CD4-positive, alpha-beta memory T cell (primary cell): ENCODE measurements at regions of chrX and their contacts with region 1.

Region 1: DNA sequence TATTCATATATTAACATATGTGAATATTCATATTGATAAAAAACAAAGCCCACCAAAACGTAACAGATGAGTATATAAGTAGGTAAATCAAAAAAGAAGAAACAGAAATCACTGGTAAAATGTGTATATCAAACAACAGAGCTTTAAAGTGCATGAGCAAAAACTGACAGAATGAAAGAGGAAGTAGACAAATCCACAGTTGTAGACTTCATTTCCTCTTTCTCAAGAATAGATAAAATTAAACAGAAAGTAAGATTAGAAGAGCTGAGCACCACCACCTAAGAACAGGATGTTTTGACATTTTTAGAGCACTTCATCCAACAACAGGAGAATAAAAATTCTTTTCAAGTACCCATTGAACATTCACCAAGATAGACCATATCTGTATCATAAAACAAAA is 64.6 kb downstream of the CNKSR2 start:
- DNase-seq: peak in 4 of 5 donors; percentile 9 to 28 (median 17)
- H3K4me3 ChIP-seq: no peak overlapping the region
- H3K4me3 Mint-ChIP-seq: peak overlapping the region; percentile 62 to 79 (median 76)
- H3K27ac ChIP-seq: no peak overlapping the region
- H3K27ac Mint-ChIP-seq: peak overlapping the region; percentile 32 to 93 (median 73)
- H3K4me1 ChIP-seq: peaks cover 15% of the 10 kb centered on the region
- H3K4me1 Mint-ChIP-seq: peaks cover 6 to 22% (median 12%) of the 10 kb centered on the region in 4 donors
- H3K27me3 ChIP-seq: no peaks in the 10 kb centered on the region
- H3K27me3 Mint-ChIP-seq: no peaks in the 10 kb centered on the region

Region 2: GRCh38 chrX:21207080-21207479 is 231.7 kb before region 1 on chrX:
- CTCF ChIA-PET with region 1: no interaction called
- POLR2A ChIA-PET with region 1: no interaction called
- intact Hi-C with region 1: no loop called
- DNase-seq: no peak
- H3K4me3 ChIP-seq: no peak overlapping the region
- H3K4me3 Mint-ChIP-seq: no peak overlapping the region
- H3K27ac ChIP-seq: no peak overlapping the region
- H3K27ac Mint-ChIP-seq: no peak overlapping the region
- H3K4me1 ChIP-seq: no peaks in the 10 kb centered on the region
- H3K4me1 Mint-ChIP-seq: no peaks in the 10 kb centered on the region
- H3K27me3 ChIP-seq: no peaks in the 10 kb centered on the region
- H3K27me3 Mint-ChIP-seq: no peaks in the 10 kb centered on the region

Region 3: GRCh38 chrX:21374163-21374993 is 64.4 kb before region 1 on chrX and contains the start of gene CNKSR2:
- CTCF ChIA-PET with region 1: no interaction called
- POLR2A ChIA-PET with region 1: interaction called, 5 read pairs
- intact Hi-C with region 1: loop called (anchors 2 kb)
- DNase-seq: peak; percentile 60 to 68 (median 65)
- H3K4me3 ChIP-seq: peak within 1 kb of the TSS in 1 of 2 donors; percentile 52
- H3K4me3 Mint-ChIP-seq: peak within 1 kb of the TSS; percentile 86 to 92 (median 87)
- H3K27ac ChIP-seq: peak within 1 kb of the TSS; percentile 21
- H3K27ac Mint-ChIP-seq: peak within 1 kb of the TSS in 6 of 7 donors; percentile 9 to 81 (median 36)
- H3K4me1 ChIP-seq: peaks cover 19% of the 10 kb centered on the region
- H3K4me1 Mint-ChIP-seq: peaks cover 2 to 22% (median 12%) of the 10 kb centered on the region in 4 donors
- H3K27me3 ChIP-seq: no peaks in the 10 kb centered on the region
- H3K27me3 Mint-ChIP-seq: peaks cover 0 to 1% of the 10 kb centered on the region in 2 donors
- total RNA-seq, gene CNKSR2: 8.6 to 9.8 TPM

Region 4: GRCh38 chrX:21398426-21398825 is 40.4 kb before region 1 on chrX:
- CTCF ChIA-PET with region 1: no interaction called
- POLR2A ChIA-PET with region 1: no interaction called
- intact Hi-C with region 1: loop called (anchors 5 kb)
- DNase-seq: no peak
- H3K4me3 ChIP-seq: no peak overlapping the region
- H3K4me3 Mint-ChIP-seq: no peak overlapping the region
- H3K27ac ChIP-seq: no peak overlapping the region
- H3K27ac Mint-ChIP-seq: no peak overlapping the region
- H3K4me1 ChIP-seq: no peaks in the 10 kb centered on the region
- H3K4me1 Mint-ChIP-seq: peaks cover 0 to 1% (median 0%) of the 10 kb centered on the region in 4 donors
- H3K27me3 ChIP-seq: no peaks in the 10 kb centered on the region
- H3K27me3 Mint-ChIP-seq: no peaks in the 10 kb centered on the region

Region 5: DNA sequence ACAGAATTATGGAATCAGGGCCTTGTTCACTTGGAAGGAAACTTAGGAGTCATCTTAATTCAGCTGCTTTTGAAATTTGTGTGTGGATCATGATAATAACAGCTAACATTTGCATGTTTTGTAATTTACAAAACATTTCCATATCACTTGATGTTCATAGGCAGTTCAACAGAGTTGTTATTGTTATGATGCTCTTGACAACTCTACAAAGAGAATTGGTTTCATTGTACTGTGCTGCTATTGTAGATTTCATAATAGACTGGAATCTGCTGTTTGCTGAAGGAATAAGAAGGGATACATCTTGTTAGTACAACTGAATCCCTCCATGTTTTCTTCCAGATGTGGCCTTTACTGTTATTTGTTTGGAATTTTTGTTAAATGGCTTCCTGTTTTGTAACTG is 18.9 kb after region 1 on chrX:
- CTCF ChIA-PET with region 1: no interaction called
- POLR2A ChIA-PET with region 1: no interaction called
- intact Hi-C with region 1: no loop called
- DNase-seq: no peak
- H3K4me3 ChIP-seq: no peak overlapping the region
- H3K4me3 Mint-ChIP-seq: no peak overlapping the region
- H3K27ac ChIP-seq: no peak overlapping the region
- H3K27ac Mint-ChIP-seq: no peak overlapping the region
- H3K4me1 ChIP-seq: no peaks in the 10 kb centered on the region
- H3K4me1 Mint-ChIP-seq: no peaks in the 10 kb centered on the region
- H3K27me3 ChIP-seq: no peaks in the 10 kb centered on the region
- H3K27me3 Mint-ChIP-seq: no peaks in the 10 kb centered on the region

Region 6: DNA sequence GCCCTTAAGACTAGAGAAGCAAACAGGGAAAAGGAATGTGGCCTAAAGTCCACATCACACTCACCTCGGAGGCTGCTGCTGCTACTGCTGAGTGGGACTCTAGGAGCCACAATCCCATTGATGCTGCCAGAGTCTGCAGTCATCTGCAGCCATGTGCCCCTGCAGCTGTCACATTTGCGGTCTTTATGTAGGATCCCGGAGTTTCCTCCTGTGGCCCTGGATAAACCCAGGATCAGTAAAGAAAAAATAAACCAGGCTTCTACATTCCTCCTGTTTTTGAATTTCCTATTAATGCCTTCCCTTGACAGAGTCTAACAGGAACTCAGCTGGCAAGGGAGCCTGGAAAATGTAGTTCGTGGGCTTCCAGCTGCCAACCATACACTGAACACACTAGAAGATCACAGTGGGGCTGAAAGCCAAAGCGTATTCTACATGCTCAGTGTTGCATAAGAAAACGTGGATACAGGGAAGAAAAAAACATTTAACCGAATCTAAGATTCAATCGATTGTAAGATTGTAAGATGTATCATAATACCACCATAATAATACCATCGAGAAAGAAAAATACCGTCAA is 583.0 kb after region 1 on chrX:
- CTCF ChIA-PET with region 1: no interaction called
- POLR2A ChIA-PET with region 1: no interaction called
- intact Hi-C with region 1: no loop called
- DNase-seq: no peak
- H3K4me3 ChIP-seq: no peak overlapping the region
- H3K4me3 Mint-ChIP-seq: no peak overlapping the region
- H3K27ac ChIP-seq: no peak overlapping the region
- H3K27ac Mint-ChIP-seq: no peak overlapping the region
- H3K4me1 ChIP-seq: no peaks in the 10 kb centered on the region
- H3K4me1 Mint-ChIP-seq: no peaks in the 10 kb centered on the region
- H3K27me3 ChIP-seq: no peaks in the 10 kb centered on the region
- H3K27me3 Mint-ChIP-seq: no peaks in the 10 kb centered on the region